ENCODE measurements at regions of chr1 and their contacts with region 1.

Region 1: GRCh38 chr1:183915625-183916510 is 110.9 kb downstream of the RGL1 start:
- DNase-seq: peak; percentile 78 to 90 (median 82)
- ATAC-seq: peak; percentile 93
- H3K4me3 ChIP-seq: no peak overlapping the region
- H3K27ac ChIP-seq: no peak overlapping the region
- H3K4me1 ChIP-seq: peaks cover 0 to 5% of the 10 kb centered on the region in 2 experiments; a peak in 2 of 5 replicates
- H3K27me3 ChIP-seq: peaks cover 0 to 10% of the 10 kb centered on the region in 2 experiments; a peak in 2 of 5 replicates
- CTCF ChIP-seq: peak; percentile 86 to 96 (median 89)
- EP300 ChIP-seq: peak; percentile 45
- POLR2A ChIP-seq: no peak
- RAD21 ChIP-seq: peak; percentile 91 to 95

Region 2: GRCh38 chr1:183281553-183282091 is 634.2 kb before region 1 on chr1:
- CTCF ChIA-PET with region 1: interaction called, 3 read pairs
- POLR2A ChIA-PET with region 1: no interaction called
- in situ Hi-C with region 1: no loop called
- intact Hi-C with region 1: loop called (anchors 10 kb)
- DNase-seq: peak; percentile 79 to 85 (median 82)
- ATAC-seq: peak; percentile 98
- H3K4me3 ChIP-seq: no peak overlapping the region
- H3K27ac ChIP-seq: no peak overlapping the region
- H3K4me1 ChIP-seq: no peaks in the 10 kb centered on the region
- H3K27me3 ChIP-seq: peaks cover 19 to 55% of the 10 kb centered on the region in 2 experiments; a peak in 4 of 5 replicates
- CTCF ChIP-seq: peak; percentile 84 to 93 (median 92)
- EP300 ChIP-seq: no peak
- POLR2A ChIP-seq: no peak
- RAD21 ChIP-seq: peak; percentile 82 to 86

Region 3: GRCh38 chr1:184061396-184062003 is 145.6 kb after region 1 on chr1:
- CTCF ChIA-PET with region 1: no interaction called
- POLR2A ChIA-PET with region 1: no interaction called
- in situ Hi-C with region 1: no loop called
- intact Hi-C with region 1: no loop called
- DNase-seq: no peak
- ATAC-seq: peak; percentile 57
- H3K4me3 ChIP-seq: no peak overlapping the region
- H3K27ac ChIP-seq: no peak overlapping the region
- H3K4me1 ChIP-seq: no peaks in the 10 kb centered on the region; a peak in 1 of 5 replicates
- H3K27me3 ChIP-seq: no peaks in the 10 kb centered on the region
- CTCF ChIP-seq: no peak
- EP300 ChIP-seq: no peak
- POLR2A ChIP-seq: no peak
- RAD21 ChIP-seq: no peak

Region 4: DNA sequence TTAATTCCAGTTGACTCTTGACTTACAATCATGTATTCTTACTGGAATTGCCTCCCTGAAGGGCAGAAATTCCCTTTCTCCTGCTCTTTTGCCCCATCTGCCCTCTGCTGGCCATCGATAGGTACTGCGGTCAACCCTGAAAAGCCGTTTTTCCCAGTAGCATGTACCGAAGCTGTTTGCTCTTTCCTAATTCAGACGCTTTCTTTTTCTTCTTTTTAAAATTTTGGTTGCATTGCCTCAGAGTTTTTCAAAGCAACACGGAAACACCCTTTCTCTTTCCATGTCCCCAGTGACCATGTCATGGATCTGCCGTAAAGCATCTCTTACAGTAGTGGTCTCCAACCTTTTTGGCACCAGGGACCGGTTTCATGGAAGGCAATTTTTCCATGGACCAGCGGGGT is 306.8 kb after region 1 on chr1:
- CTCF ChIA-PET with region 1: no interaction called
- POLR2A ChIA-PET with region 1: no interaction called
- in situ Hi-C with region 1: no loop called
- intact Hi-C with region 1: loop called (anchors 5 kb)
- DNase-seq: peak; percentile 64 to 71 (median 68)
- ATAC-seq: peak; percentile 77
- H3K4me3 ChIP-seq: no peak overlapping the region
- H3K27ac ChIP-seq: no peak overlapping the region
- H3K4me1 ChIP-seq: no peaks in the 10 kb centered on the region
- H3K27me3 ChIP-seq: peaks cover 14 to 26% of the 10 kb centered on the region in 2 experiments
- CTCF ChIP-seq: peak; percentile 86 to 95 (median 92)
- EP300 ChIP-seq: no peak
- POLR2A ChIP-seq: no peak
- RAD21 ChIP-seq: peak; percentile 87 to 90